Activated CD8-positive, alpha-beta T cell treated with anti-CD3 and anti-CD28 coated beads, Interleukin-2, amount 10 ng/mL, durations not matched to agents 7 days and 5 days (primary cell): ENCODE measurements at regions of chr1 and their contacts with region 1.

Region 1: DNA sequence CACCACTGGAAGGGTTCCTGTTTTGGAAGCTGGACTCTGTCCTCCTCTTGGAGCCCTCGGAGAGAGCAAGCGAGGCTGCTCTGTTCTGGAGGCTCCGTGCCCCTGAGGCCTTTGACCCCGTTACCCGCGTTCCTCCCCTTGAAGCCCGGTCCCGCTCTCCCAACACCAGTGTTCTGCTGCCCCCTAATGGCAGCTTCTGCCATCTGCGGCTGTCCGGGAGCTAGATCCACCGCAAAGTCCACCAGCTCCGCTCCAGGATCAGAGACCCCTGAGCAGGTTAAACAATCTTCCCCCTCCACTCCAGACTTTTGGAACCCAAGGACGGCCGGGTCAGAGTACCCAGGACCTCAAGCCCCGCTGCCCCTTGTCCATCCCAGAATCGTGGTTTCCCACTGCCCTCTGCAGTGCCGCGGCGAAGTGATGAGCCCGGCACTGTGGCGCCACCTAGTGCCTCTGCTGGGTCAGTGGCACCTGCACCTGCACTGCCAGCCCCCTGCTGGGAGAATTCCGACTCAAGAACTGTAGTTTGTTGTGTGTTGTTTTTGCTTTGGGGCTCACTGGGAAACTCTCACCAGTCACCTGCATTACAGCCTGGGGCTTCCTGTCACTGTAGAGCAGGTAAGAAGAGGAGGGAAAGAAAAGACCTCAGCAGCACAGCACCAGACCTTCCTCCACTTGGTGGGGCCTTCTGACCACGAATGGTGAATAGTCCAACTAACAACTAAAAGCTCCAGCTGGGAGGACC is 63.5 kb upstream of the NFASC start:
- DNase-seq: peak; percentile 90
- ATAC-seq: peak; percentile 96
- H3K4me3 Mint-ChIP-seq: peak overlapping the region; percentile 78
- H3K27ac Mint-ChIP-seq: peak overlapping the region; percentile 88
- H3K4me1 Mint-ChIP-seq: peaks cover 25% of the 10 kb centered on the region
- H3K27me3 Mint-ChIP-seq: peaks cover 11% of the 10 kb centered on the region

Region 2: GRCh38 chr1:204446370-204447111 is 360.6 kb before region 1 on chr1:
- CTCF ChIA-PET with region 1: interaction called, 20 read pairs
- POLR2A ChIA-PET with region 1: no interaction called
- DNase-seq: peak; percentile 84
- ATAC-seq: peak; percentile 93
- H3K4me3 Mint-ChIP-seq: no peak overlapping the region
- H3K27ac Mint-ChIP-seq: peak overlapping the region; percentile 81
- H3K4me1 Mint-ChIP-seq: peaks cover 30% of the 10 kb centered on the region
- H3K27me3 Mint-ChIP-seq: no peaks in the 10 kb centered on the region

Region 3: GRCh38 chr1:204560590-204561150 is 246.4 kb before region 1 on chr1:
- CTCF ChIA-PET with region 1: interaction called, 175 read pairs
- POLR2A ChIA-PET with region 1: no interaction called
- DNase-seq: no peak
- ATAC-seq: no peak
- H3K4me3 Mint-ChIP-seq: no peak overlapping the region
- H3K27ac Mint-ChIP-seq: no peak overlapping the region
- H3K4me1 Mint-ChIP-seq: peaks cover 49% of the 10 kb centered on the region
- H3K27me3 Mint-ChIP-seq: no peaks in the 10 kb centered on the region

Region 4: DNA sequence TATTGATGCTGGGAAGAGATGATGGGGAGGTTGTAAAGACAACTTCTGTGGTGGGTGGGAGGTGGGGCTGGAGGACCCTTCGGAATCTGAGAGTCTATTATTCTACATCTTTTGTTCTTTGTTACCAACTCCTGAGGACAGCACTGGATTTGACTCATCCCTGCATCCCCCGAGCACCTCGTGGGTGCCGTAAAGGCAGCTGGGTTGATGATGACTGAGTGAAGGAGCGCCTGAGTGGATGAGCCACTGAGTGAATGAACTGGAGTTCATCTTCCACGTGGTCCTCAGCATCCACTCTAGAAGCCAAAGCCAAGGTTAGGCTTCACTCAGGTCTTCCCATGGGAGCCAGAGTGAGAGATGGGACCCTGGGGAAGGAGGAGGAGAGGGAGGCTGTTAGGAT is 199.2 kb before region 1 on chr1:
- CTCF ChIA-PET with region 1: interaction called, 20 read pairs
- POLR2A ChIA-PET with region 1: no interaction called
- DNase-seq: no peak
- ATAC-seq: no peak
- H3K4me3 Mint-ChIP-seq: no peak overlapping the region
- H3K27ac Mint-ChIP-seq: no peak overlapping the region
- H3K4me1 Mint-ChIP-seq: no peaks in the 10 kb centered on the region
- H3K27me3 Mint-ChIP-seq: peaks cover 4% of the 10 kb centered on the region

Region 5: GRCh38 chr1:204746838-204747442 is 60.2 kb before region 1 on chr1:
- CTCF ChIA-PET with region 1: interaction called, 15 read pairs
- POLR2A ChIA-PET with region 1: no interaction called
- DNase-seq: peak; percentile 65
- ATAC-seq: peak; percentile 88
- H3K4me3 Mint-ChIP-seq: no peak overlapping the region
- H3K27ac Mint-ChIP-seq: no peak overlapping the region
- H3K4me1 Mint-ChIP-seq: no peaks in the 10 kb centered on the region
- H3K27me3 Mint-ChIP-seq: peaks cover 18% of the 10 kb centered on the region

Region 6: GRCh38 chr1:204819495-204819894 is 12.4 kb after region 1 on chr1:
- CTCF ChIA-PET with region 1: interaction called, 85 read pairs
- POLR2A ChIA-PET with region 1: interaction called, 3 read pairs
- DNase-seq: no peak
- ATAC-seq: no peak
- H3K4me3 Mint-ChIP-seq: no peak overlapping the region
- H3K27ac Mint-ChIP-seq: no peak overlapping the region
- H3K4me1 Mint-ChIP-seq: no peaks in the 10 kb centered on the region
- H3K27me3 Mint-ChIP-seq: peaks cover 17% of the 10 kb centered on the region